ENCODE measurements at regions of chr20 and their contacts with region 1.

Region 1: DNA sequence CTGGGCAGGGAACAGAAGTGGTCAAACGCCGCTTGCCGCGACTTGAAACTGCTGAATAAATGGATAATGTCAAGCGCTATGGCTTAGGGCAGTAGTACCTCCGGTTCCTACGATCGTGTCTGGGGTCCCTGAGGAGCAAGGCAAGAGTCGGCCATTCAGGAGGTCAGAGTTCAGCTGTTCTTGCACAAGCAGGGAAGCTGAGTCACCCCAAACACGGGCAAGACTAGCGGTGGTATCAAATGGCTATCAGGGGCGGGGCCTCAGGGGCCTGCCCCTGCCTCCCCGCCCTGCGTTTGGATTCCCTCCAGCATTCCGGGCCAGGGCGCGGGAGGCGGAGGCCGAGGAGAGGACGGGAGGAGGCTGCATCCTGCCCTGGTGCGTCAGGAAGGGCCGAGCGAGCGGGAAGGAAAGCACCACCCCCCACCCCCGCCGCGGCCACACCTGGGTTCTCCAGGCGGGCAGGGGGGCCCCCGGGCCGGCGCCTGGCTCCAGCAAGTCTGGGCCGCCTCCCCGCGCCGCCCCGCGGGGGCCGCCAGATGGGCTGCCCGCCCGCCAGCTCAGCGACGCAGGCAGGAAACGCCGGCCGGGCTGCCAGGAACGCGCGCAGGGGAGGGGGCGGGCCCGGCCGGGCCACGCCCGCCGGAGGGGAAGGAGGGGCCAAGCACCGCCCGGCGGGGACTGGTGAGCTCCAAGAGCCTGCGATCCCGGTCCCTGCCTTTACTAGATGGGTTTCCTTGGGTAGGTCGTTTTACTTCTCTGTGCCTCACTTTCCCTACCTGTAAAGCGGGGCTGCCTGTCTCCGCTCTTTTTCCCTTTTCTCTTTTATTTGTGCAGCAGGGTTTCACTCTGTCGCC is 32.2 kb upstream of the ID1 start:
- DNase-seq: peak; percentile 91
- H3K4me3 Mint-ChIP-seq: peak overlapping the region; percentile 84
- H3K27ac Mint-ChIP-seq: peak overlapping the region; percentile 85
- H3K4me1 Mint-ChIP-seq: peaks cover 27% of the 10 kb centered on the region
- H3K27me3 Mint-ChIP-seq: peaks cover 11% of the 10 kb centered on the region

Region 2: GRCh38 chr20:31560094-31560899 is 12.6 kb before region 1 on chr20:
- CTCF ChIA-PET with region 1: interaction called, 95 read pairs
- DNase-seq: peak; percentile 88
- H3K4me3 Mint-ChIP-seq: no peak overlapping the region
- H3K27ac Mint-ChIP-seq: peak overlapping the region; percentile 90
- H3K4me1 Mint-ChIP-seq: peaks cover 15% of the 10 kb centered on the region
- H3K27me3 Mint-ChIP-seq: no peaks in the 10 kb centered on the region

Region 3: GRCh38 chr20:31637660-31638059 is 64.7 kb after region 1 on chr20 and contains the start of gene COX4I2:
- CTCF ChIA-PET with region 1: no interaction called
- DNase-seq: no peak
- H3K4me3 Mint-ChIP-seq: no peak within 1 kb of the TSS
- H3K27ac Mint-ChIP-seq: no peak within 1 kb of the TSS
- H3K4me1 Mint-ChIP-seq: peaks cover 6% of the 10 kb centered on the region
- H3K27me3 Mint-ChIP-seq: peaks cover 52% of the 10 kb centered on the region

Measured in activated naive CD4-positive, alpha-beta T cell treated with anti-CD3 and anti-CD28 coated beads, Interleukin-2, amount 10 ng/mL, durations not matched to agents 7 days and 5 days (primary cell).